ENCODE measurements at regions of chr18 and their contacts with region 1.

Region 1: DNA sequence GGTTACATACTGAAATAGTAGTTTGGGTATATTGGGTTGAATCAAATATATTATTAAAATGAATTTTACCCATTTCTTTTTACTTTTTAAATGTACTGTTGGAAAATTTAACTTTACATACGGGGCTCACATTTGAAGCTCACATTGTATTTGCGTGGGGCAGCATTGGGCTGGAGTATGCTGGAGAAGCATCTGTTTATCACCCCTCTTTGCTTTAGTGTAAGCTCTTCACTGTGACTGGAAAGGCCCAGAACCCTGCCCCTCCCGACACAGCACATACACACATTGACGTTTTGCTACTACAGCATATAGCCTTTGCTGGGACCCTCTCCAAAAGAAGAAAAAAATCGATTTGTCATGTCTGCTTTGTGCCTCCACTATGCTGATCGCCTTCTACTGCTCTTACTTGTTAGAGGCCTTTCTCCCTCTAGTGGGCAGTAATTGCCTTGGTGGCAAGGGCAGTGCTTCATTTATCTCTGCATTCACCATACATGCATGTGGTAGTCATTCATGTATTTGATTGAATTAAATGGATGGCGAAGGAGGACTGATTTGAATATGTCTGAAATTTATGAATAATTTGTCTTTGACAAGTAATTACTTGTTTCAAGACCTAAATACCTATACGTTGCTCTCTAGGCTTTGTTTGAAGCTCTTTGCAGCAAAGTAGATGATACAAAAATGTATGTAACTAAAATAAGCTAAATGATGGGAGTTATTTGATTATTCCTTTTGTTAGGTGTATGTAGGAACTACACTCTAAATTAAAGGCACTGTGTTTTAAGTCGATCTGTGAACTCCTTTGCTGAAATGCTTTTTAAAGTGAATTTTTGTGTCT is 37.4 kb downstream of the VAPA start:
- DNase-seq: no peak
- ATAC-seq: peak; percentile 61
- H3K4me3 Mint-ChIP-seq: no peak overlapping the region
- H3K27ac Mint-ChIP-seq: no peak overlapping the region
- H3K4me1 Mint-ChIP-seq: no peaks in the 10 kb centered on the region
- H3K27me3 Mint-ChIP-seq: no peaks in the 10 kb centered on the region

Region 2: GRCh38 chr18:9913526-9914333 is 37.5 kb before region 1 on chr18 and contains the start of gene VAPA:
- CTCF ChIA-PET with region 1: interaction called, 10 read pairs
- DNase-seq: peak; percentile 95
- ATAC-seq: peak; percentile 88
- H3K4me3 Mint-ChIP-seq: peak within 1 kb of the TSS; percentile 86
- H3K27ac Mint-ChIP-seq: peak within 1 kb of the TSS; percentile 93
- H3K4me1 Mint-ChIP-seq: peaks cover 27% of the 10 kb centered on the region
- H3K27me3 Mint-ChIP-seq: peaks cover 19% of the 10 kb centered on the region
- total RNA-seq, gene VAPA: 107 to 134 TPM